Endothelial cell of umbilical vein (primary cell): ENCODE measurements at regions of chr20 and their contacts with region 1.

Region 1: DNA sequence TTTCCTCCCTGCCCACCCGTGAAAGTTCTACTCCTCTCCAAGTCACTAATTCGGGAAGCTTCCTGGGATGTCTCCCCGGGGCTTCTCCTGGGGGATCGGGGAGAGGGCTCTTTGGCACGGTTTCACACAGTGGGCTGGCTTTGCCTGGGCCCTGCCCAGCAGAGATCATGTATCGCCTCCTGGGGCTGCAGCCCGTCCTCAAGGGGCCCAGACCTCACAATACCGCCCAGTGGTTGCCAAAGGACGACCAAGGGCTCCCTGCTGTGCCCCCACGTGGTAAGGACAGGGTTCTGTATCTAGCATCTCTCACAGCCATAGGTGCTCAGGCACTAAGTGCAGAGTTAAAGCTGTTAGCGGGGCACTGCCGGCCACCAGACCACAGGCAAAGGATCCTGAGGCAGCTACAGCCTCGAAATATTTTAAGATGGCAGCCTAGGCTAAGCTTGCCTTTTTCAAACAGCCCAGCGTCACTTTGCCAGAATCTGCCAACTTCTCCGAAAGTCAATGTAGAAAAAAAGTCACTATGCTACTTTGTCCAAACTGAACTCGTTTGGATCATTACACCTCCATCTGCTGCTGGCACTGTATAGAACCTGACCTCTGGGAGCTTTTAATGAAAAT is 1.4 kb upstream of the NNAT start:
- DNase-seq: peak; percentile 41
- H3K4me3 ChIP-seq: no peak overlapping the region
- H3K27ac ChIP-seq: peak overlapping the region; percentile 1
- H3K4me1 ChIP-seq: peaks cover 27% of the 10 kb centered on the region
- H3K27me3 ChIP-seq: no peaks in the 10 kb centered on the region
- CTCF ChIP-seq: peak in 1 of 2 donors; percentile 14
- POLR2A ChIP-seq: no peak

Region 2: GRCh38 chr20:37270576-37271420 is 248.8 kb before region 1 on chr20:
- CTCF ChIA-PET with region 1: interaction called, 4 read pairs
- POLR2A ChIA-PET with region 1: no interaction called
- dilution Hi-C with region 1: loop called (anchors 25 kb)
- intact Hi-C with region 1: no loop called
- DNase-seq: no peak
- H3K4me3 ChIP-seq: no peak overlapping the region
- H3K27ac ChIP-seq: no peak overlapping the region
- H3K4me1 ChIP-seq: no peaks in the 10 kb centered on the region
- H3K27me3 ChIP-seq: no peaks in the 10 kb centered on the region
- CTCF ChIP-seq: no peak
- POLR2A ChIP-seq: no peak

Region 3: GRCh38 chr20:37392421-37393178 is 127.0 kb before region 1 on chr20:
- CTCF ChIA-PET with region 1: no interaction called
- POLR2A ChIA-PET with region 1: no interaction called
- dilution Hi-C with region 1: loop called (anchors 10 kb)
- intact Hi-C with region 1: no loop called
- DNase-seq: no peak
- H3K4me3 ChIP-seq: no peak overlapping the region
- H3K27ac ChIP-seq: no peak overlapping the region
- H3K4me1 ChIP-seq: peaks cover 9% of the 10 kb centered on the region
- H3K27me3 ChIP-seq: no peaks in the 10 kb centered on the region
- CTCF ChIP-seq: peak; percentile 36 to 52
- POLR2A ChIP-seq: no peak

Region 4: DNA sequence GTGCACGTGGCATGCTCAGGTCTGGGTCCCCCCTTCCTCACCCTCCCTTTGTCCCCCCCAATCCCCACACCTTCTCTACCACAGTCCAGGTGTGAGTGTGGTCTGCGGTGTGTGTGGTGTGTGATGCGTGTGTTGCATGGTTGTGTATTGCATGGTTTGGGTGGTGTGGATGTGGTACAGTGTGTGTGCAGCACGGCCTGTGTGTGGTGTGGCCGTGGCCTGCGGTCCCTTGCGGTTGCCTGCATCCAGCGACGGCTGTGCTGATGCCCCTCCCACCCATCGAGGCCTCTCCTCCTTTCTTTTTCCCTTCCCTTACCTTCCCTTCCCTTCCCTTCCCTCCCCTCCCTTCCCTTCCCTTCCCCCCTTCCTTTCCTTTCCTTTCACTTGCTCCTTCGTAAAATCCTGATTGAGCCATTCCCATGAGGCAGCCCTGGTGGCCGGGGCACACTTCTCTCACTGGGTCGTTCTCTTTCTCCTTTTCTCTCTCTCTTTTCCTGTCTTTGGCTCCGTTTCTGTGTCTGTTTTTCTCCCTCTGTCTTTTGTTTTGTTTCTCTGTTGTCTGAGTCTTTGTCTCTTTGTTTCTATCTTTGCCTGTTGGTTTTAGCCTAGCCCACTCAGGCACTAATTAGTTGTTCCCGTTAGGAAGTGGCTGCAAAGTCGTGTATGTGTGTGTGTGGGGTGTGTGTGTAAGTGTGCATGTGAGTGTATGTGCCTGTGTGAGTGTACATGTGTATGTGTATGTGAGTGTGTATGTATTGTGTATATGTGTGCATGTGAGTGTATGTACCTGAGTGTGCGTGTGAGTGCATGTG is 108.0 kb before region 1 on chr20:
- CTCF ChIA-PET with region 1: no interaction called
- POLR2A ChIA-PET with region 1: no interaction called
- dilution Hi-C with region 1: no loop called
- intact Hi-C with region 1: loop called (anchors 5 kb)
- DNase-seq: peak; percentile 36
- H3K4me3 ChIP-seq: no peak overlapping the region
- H3K27ac ChIP-seq: no peak overlapping the region
- H3K4me1 ChIP-seq: peaks cover 9% of the 10 kb centered on the region
- H3K27me3 ChIP-seq: peaks cover 0 to 10% of the 10 kb centered on the region in 2 experiments
- CTCF ChIP-seq: peak in 1 of 2 donors; percentile 4
- POLR2A ChIP-seq: no peak